Activated CD8-positive, alpha-beta T cell treated with anti-CD3 and anti-CD28 coated beads for 36 hours (primary cell): ENCODE measurements at regions of chr1 and their contacts with region 1.

Region 1: DNA sequence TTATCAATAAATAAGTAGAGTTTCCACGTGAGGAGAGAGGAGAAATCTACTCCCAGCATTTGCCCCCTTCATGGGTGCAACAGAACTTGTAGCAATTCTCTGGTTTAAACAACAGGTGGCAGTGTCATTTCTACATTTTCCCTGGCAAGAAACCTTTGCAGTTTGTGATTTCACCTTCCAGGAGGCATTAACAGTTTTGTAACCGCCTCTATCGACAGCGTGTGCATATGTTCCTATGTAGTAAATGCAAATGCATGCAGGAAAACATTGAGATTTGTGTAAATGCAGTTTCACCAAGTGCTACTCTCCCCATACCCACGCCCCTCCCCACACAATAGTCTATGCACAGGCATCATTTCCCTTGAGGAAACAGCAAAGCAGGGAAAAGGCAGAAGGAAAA is 494.7 kb downstream of the SMYD3 start:
- DNase-seq: peak; percentile 2
- ATAC-seq: peak; percentile 51
- H3K4me3 Mint-ChIP-seq: no peak overlapping the region
- H3K27ac Mint-ChIP-seq: no peak overlapping the region
- H3K4me1 Mint-ChIP-seq: no peaks in the 10 kb centered on the region
- H3K27me3 Mint-ChIP-seq: no peaks in the 10 kb centered on the region
- CTCF ChIP-seq: peak; percentile 66

Region 2: GRCh38 chr1:246450611-246451251 is 438.4 kb after region 1 on chr1:
- CTCF ChIA-PET with region 1: interaction called, 11 read pairs
- POLR2A ChIA-PET with region 1: no interaction called
- intact Hi-C with region 1: loop called (anchors 5 kb)
- DNase-seq: no peak
- ATAC-seq: peak; percentile 51
- H3K4me3 Mint-ChIP-seq: no peak overlapping the region
- H3K27ac Mint-ChIP-seq: no peak overlapping the region
- H3K4me1 Mint-ChIP-seq: peaks cover 7% of the 10 kb centered on the region
- H3K27me3 Mint-ChIP-seq: no peaks in the 10 kb centered on the region
- CTCF ChIP-seq: peak; percentile 69